ENCODE measurements at regions of chr17 and their contacts with region 1.

Region 1: GRCh38 chr17:18184143-18185031 is 759 bp downstream of the ALKBH5 start:
- DNase-seq: peak; percentile 39 to 73 (median 68)
- H3K4me3 ChIP-seq: peak overlapping the region; percentile 95
- H3K27ac ChIP-seq: peak overlapping the region; percentile 73 to 94
- H3K4me1 ChIP-seq: peaks cover 23% of the 10 kb centered on the region
- H3K27me3 ChIP-seq: no peaks in the 10 kb centered on the region
- CTCF ChIP-seq: no peak
- EP300 ChIP-seq: no peak
- POLR2A ChIP-seq: no peak

Region 2: DNA sequence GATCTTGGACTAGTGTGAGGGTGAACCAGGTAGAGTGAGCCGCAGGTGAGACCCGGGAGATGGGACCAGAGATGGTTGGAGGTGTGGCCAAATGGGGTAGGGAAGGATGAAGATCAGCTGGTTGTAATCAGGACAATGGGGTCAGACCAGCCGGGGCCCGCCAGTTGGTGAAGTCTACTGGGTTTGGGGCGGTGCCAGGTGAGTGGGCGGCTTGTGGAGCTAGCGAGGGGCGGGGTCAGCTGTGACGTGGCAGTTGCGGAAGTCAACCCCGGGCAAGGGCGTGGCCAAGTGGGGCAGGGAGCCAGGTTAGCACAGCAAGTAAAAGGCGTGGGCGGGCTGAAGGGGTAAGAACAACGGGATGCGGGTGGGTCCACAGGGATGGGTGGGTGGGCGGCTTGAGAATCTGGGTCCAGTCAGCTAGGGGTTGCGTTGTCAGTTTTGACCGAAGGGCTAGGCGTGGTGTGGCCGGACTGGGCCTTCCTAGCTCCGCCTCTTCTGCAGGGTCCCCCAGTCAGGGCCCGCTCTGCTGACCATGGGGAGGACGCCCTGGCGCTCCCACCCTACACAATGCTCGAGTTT is 26.3 kb before region 1 on chr17:
- intact Hi-C with region 1: loop called in 1 of 4 experiments (anchors 2 kb)
- DNase-seq: peak; percentile 94 to 97 (median 96)
- H3K4me3 ChIP-seq: peak overlapping the region; percentile 46
- H3K27ac ChIP-seq: peak overlapping the region; percentile 14 to 73
- H3K4me1 ChIP-seq: peaks cover 4% of the 10 kb centered on the region
- H3K27me3 ChIP-seq: no peaks in the 10 kb centered on the region
- CTCF ChIP-seq: no peak
- EP300 ChIP-seq: no peak
- POLR2A ChIP-seq: no peak

Region 3: DNA sequence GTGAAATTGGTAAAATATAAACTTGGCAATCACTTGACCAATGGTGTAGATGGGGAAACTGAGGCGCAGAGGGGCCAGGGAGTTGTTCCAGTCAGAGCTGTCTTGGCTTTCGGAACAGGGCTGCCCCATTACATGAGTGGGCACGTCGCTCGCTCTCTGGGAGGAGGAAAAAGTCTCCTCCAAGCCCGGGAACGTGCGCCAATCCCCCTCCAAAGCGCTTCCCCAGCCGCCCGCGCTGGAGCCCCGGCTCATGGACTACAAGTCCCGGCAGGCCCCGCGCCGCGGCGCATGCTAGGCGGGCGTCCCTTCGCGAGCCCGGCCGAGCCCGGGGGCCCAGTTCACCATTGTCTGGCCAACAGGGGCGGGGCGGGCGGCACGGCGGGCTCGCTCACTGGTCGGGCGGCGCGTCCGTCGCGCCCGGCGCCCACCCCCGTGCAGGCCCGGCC is 40.8 kb after region 1 on chr17:
- intact Hi-C with region 1: loop called in 1 of 4 experiments (anchors 5 kb)
- DNase-seq: peak; percentile 96 to 98 (median 97)
- H3K4me3 ChIP-seq: peak overlapping the region; percentile 34
- H3K27ac ChIP-seq: no peak overlapping the region
- H3K4me1 ChIP-seq: peaks cover 3% of the 10 kb centered on the region
- H3K27me3 ChIP-seq: no peaks in the 10 kb centered on the region
- CTCF ChIP-seq: no peak
- EP300 ChIP-seq: no peak
- POLR2A ChIP-seq: no peak

Region 4: GRCh38 chr17:18889658-18890057 is 705.3 kb after region 1 on chr17:
- intact Hi-C with region 1: no loop called
- DNase-seq: no peak
- H3K4me3 ChIP-seq: no peak overlapping the region
- H3K27ac ChIP-seq: no peak overlapping the region
- H3K4me1 ChIP-seq: no peaks in the 10 kb centered on the region
- H3K27me3 ChIP-seq: no peaks in the 10 kb centered on the region
- CTCF ChIP-seq: no peak
- EP300 ChIP-seq: no peak
- POLR2A ChIP-seq: no peak